ENCODE measurements at regions of chr12 and their contacts with region 1.

Region 1: DNA sequence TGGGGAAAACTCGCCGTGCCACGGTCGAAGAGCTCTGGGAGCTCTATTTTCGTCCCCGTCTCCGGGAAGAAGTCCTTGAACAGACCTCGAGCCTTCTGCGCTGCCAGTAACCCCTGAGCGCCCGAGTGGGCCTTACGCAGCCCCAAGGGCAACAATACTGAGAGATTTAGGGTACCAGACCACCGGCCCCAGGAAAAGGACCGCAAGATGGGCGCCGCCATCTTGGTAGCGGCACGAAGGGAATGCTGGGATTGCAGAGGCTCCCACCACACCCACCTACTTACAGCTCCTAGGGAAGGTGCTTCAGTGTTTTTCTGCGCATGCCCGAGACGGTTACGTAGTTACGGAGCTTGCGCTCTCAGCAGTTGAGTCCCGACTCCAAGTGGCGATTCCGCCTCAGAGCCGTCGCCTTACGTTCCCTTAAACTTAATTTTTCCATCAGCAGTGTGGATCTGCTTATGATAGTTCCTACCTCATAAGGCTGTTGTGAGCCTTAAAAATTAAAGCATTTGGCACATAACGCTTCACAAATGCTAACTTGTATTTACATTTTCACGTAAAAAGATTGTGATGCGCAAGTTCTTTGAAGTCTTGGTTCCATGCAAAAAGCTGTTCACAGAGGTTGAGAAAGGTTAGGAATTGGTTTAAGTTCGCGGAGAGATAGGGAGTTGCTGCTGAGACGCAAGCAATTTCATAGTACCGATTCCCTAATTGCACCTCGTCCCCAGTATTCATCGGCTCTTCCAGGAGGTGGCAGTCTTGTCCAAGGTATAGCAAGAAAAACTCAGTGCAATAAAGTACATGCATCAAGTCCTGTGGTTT is at the start of gene YARS2:
- DNase-seq: peak; percentile 93
- ATAC-seq: peak; percentile 85
- H3K4me3 ChIP-seq: peak within 1 kb of the TSS; percentile 78 to 97 (median 91)
- H3K4me3 Mint-ChIP-seq: peak within 1 kb of the TSS; percentile 93
- H3K27ac ChIP-seq: peak within 1 kb of the TSS; percentile 64 to 65
- H3K27ac Mint-ChIP-seq: peak within 1 kb of the TSS; percentile 89
- H3K4me1 ChIP-seq: peaks cover 12 to 15% of the 10 kb centered on the region in 2 donors
- H3K4me1 Mint-ChIP-seq: peaks cover 19% of the 10 kb centered on the region
- H3K27me3 ChIP-seq: no peaks in the 10 kb centered on the region
- H3K27me3 Mint-ChIP-seq: no peaks in the 10 kb centered on the region
- CTCF ChIP-seq: peak; percentile 92
- total RNA-seq, gene YARS2: 18.8 and 24.3 TPM in 2 replicates

Region 2: DNA sequence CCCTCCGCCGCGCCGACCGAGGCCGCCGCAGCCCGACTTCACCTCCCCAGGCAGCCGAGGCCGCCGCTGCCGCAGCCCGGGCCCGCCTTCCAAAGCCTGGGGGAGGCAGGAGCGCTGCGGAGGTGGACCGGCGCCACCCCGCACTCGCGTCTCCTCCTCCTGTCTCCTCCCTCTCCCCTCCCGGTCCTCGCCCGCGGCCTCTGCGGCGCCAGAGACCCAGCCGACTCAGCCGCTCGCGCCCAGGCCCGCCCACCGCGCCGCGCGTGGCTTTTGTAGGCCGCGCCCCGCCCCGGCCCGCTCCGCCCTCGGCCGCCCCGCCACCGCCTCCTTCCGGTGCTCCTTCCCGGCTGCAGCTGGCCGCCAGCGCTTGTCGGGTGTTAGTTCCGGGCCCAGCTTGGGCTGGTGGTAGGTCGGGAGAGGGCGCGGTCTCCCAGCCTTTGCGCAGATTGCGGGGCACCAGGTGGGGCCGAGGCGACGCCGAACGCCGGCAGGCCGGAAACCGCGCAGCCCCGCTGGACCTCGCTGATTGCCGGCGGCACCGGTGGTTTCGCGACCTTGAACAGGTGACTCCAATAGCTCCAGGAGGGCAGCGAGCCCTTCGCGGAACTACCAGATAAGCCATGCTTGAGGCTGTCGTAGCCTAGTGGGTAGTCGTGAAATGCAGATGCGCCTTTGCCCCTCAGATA is 2001.0 kb before region 1 on chr12 and contains the start of gene CAPRIN2:
- CTCF ChIA-PET with region 1: no interaction called
- POLR2A ChIA-PET with region 1: no interaction called
- intact Hi-C with region 1: loop called (anchors 2 kb)
- DNase-seq: peak; percentile 95
- ATAC-seq: peak; percentile 88
- H3K4me3 ChIP-seq: peak within 1 kb of the TSS; percentile 49 to 72 (median 71)
- H3K4me3 Mint-ChIP-seq: peak within 1 kb of the TSS; percentile 99
- H3K27ac ChIP-seq: peak within 1 kb of the TSS; percentile 52 to 79
- H3K27ac Mint-ChIP-seq: peak within 1 kb of the TSS; percentile 89
- H3K4me1 ChIP-seq: peaks cover 14 to 15% of the 10 kb centered on the region in 2 donors
- H3K4me1 Mint-ChIP-seq: peaks cover 23% of the 10 kb centered on the region
- H3K27me3 ChIP-seq: no peaks in the 10 kb centered on the region
- H3K27me3 Mint-ChIP-seq: no peaks in the 10 kb centered on the region
- CTCF ChIP-seq: peak; percentile 29
- total RNA-seq, gene CAPRIN2: 55.2 and 57.8 TPM in 2 replicates

Region 3: DNA sequence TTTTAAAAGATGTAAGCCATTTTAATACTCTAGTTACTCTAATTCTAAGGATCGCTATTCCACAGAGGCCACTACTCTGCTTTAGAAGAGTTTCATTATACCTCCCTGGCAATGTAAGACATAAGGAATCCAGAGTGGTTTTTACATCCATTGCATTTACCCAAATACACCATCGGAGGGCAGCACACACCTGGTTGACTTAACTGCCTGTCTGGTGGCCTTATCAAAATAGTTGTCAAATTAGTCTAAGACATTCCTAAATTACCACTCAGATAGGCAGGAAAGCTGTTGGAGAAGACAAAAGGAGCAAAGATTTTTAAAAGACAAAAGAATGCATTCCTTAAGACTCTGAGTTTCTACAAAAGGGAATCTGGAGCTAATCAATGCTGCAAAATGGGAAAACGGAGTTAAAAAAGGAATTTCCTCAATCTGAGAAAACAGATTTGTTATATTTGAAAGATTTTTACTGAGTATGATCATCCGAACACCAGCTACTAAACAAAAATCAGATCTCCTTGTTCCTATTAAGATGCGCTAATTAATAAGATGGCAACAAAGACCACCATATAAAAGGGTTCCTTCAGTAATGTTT is 390.3 kb before region 1 on chr12:
- CTCF ChIA-PET with region 1: interaction called, 16 read pairs
- POLR2A ChIA-PET with region 1: no interaction called
- intact Hi-C with region 1: loop called (anchors 5 kb)
- DNase-seq: peak; percentile 60
- ATAC-seq: peak; percentile 43
- H3K4me3 ChIP-seq: no peak overlapping the region
- H3K4me3 Mint-ChIP-seq: no peak overlapping the region
- H3K27ac ChIP-seq: no peak overlapping the region
- H3K27ac Mint-ChIP-seq: no peak overlapping the region
- H3K4me1 ChIP-seq: no peaks in the 10 kb centered on the region
- H3K4me1 Mint-ChIP-seq: no peaks in the 10 kb centered on the region
- H3K27me3 ChIP-seq: no peaks in the 10 kb centered on the region
- H3K27me3 Mint-ChIP-seq: no peaks in the 10 kb centered on the region
- CTCF ChIP-seq: peak; percentile 88

Region 4: DNA sequence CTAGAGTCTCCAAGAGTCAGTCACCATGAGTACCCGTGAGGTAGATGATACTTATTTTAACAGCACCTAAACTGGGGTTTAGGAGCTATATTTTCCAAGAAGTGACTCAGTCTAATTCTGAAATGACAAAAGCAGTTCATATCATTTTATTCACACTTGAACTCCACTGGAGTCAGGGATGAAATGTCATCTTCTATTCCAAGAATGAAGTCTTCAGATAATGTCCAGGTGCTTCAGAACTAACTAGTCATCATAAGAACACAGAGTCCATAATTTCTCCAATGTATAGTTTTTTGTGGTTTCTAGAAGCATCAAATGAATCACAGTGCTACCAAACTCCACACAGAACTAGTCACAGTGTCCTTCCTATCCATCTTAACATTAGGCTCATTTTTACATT is 63.5 kb before region 1 on chr12:
- CTCF ChIA-PET with region 1: no interaction called
- POLR2A ChIA-PET with region 1: no interaction called
- intact Hi-C with region 1: no loop called
- DNase-seq: no peak
- ATAC-seq: no peak
- H3K4me3 ChIP-seq: no peak overlapping the region
- H3K4me3 Mint-ChIP-seq: no peak overlapping the region
- H3K27ac ChIP-seq: no peak overlapping the region
- H3K27ac Mint-ChIP-seq: no peak overlapping the region
- H3K4me1 ChIP-seq: no peaks in the 10 kb centered on the region
- H3K4me1 Mint-ChIP-seq: peaks cover 15% of the 10 kb centered on the region
- H3K27me3 ChIP-seq: no peaks in the 10 kb centered on the region
- H3K27me3 Mint-ChIP-seq: no peaks in the 10 kb centered on the region
- CTCF ChIP-seq: no peak

Region 5: DNA sequence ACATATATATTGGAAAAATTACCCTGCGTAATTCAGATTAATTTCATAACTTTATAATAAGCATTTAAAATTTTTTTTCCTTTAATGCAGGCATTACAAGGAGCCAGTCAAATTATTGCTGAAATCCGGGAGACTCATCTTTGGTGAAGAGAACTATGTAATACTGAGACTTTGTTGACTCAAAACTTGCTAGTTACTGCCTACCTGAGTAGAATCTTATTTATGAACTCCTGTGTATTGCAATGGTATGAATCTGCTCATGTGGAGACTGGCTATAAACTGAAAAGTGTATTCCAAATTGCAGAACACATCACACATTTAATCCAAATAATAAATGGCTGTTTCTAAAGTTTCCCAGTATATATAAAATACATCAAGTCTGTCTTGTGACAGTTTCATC is 12.6 kb before region 1 on chr12:
- CTCF ChIA-PET with region 1: interaction called, 14 read pairs
- POLR2A ChIA-PET with region 1: no interaction called
- intact Hi-C with region 1: no loop called
- DNase-seq: no peak
- ATAC-seq: no peak
- H3K4me3 ChIP-seq: no peak overlapping the region
- H3K4me3 Mint-ChIP-seq: no peak overlapping the region
- H3K27ac ChIP-seq: no peak overlapping the region
- H3K27ac Mint-ChIP-seq: no peak overlapping the region
- H3K4me1 ChIP-seq: no peaks in the 10 kb centered on the region
- H3K4me1 Mint-ChIP-seq: no peaks in the 10 kb centered on the region
- H3K27me3 ChIP-seq: no peaks in the 10 kb centered on the region
- H3K27me3 Mint-ChIP-seq: no peaks in the 10 kb centered on the region
- CTCF ChIP-seq: no peak

Region 6: DNA sequence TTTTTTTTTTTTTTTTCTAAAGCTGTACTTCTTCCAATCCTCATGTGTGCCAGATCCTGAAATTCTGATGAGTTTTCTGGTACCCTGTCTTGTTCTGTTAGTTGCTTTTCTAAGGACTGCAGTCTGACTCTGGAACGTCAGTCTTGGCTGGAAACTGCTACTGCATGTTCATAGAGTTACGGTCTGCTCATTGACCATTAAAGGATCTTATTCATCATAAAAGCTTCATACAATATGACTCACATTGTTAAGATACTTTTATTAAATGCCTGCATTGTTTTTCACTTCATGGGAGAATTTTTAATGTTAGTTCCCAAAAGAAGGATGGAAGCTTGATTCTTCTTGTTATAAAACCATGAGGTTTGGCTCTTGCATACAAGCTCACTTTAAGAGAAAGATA is 450.1 kb after region 1 on chr12:
- CTCF ChIA-PET with region 1: no interaction called
- POLR2A ChIA-PET with region 1: no interaction called
- intact Hi-C with region 1: no loop called
- DNase-seq: no peak
- ATAC-seq: no peak
- H3K4me3 ChIP-seq: no peak overlapping the region
- H3K4me3 Mint-ChIP-seq: no peak overlapping the region
- H3K27ac ChIP-seq: no peak overlapping the region
- H3K27ac Mint-ChIP-seq: no peak overlapping the region
- H3K4me1 ChIP-seq: no peaks in the 10 kb centered on the region
- H3K4me1 Mint-ChIP-seq: no peaks in the 10 kb centered on the region
- H3K27me3 ChIP-seq: no peaks in the 10 kb centered on the region
- H3K27me3 Mint-ChIP-seq: no peaks in the 10 kb centered on the region
- CTCF ChIP-seq: no peak

Region 7: GRCh38 chr12:33605751-33606150 is 849.9 kb after region 1 on chr12:
- CTCF ChIA-PET with region 1: interaction called, 3 read pairs
- POLR2A ChIA-PET with region 1: no interaction called
- intact Hi-C with region 1: loop called (anchors 10 kb)
- DNase-seq: no peak
- ATAC-seq: no peak
- H3K4me3 ChIP-seq: no peak overlapping the region
- H3K4me3 Mint-ChIP-seq: no peak overlapping the region
- H3K27ac ChIP-seq: no peak overlapping the region
- H3K27ac Mint-ChIP-seq: no peak overlapping the region
- H3K4me1 ChIP-seq: no peaks in the 10 kb centered on the region
- H3K4me1 Mint-ChIP-seq: no peaks in the 10 kb centered on the region
- H3K27me3 ChIP-seq: no peaks in the 10 kb centered on the region
- H3K27me3 Mint-ChIP-seq: no peaks in the 10 kb centered on the region
- CTCF ChIP-seq: no peak

Region 8: GRCh38 chr12:34033628-34034282 is 1277.9 kb after region 1 on chr12:
- CTCF ChIA-PET with region 1: interaction called, 10 read pairs
- POLR2A ChIA-PET with region 1: no interaction called
- intact Hi-C with region 1: no loop called
- DNase-seq: peak; percentile 46
- ATAC-seq: no peak
- H3K4me3 ChIP-seq: no peak overlapping the region
- H3K4me3 Mint-ChIP-seq: no peak overlapping the region
- H3K27ac ChIP-seq: no peak overlapping the region
- H3K27ac Mint-ChIP-seq: no peak overlapping the region
- H3K4me1 ChIP-seq: no peaks in the 10 kb centered on the region
- H3K4me1 Mint-ChIP-seq: no peaks in the 10 kb centered on the region
- H3K27me3 ChIP-seq: no peaks in the 10 kb centered on the region
- H3K27me3 Mint-ChIP-seq: no peaks in the 10 kb centered on the region
- CTCF ChIP-seq: peak; percentile 79